Colonic mucosa (tissue), 4 donors: ENCODE measurements at regions of chr16 and their contacts with region 1.

Region 1: DNA sequence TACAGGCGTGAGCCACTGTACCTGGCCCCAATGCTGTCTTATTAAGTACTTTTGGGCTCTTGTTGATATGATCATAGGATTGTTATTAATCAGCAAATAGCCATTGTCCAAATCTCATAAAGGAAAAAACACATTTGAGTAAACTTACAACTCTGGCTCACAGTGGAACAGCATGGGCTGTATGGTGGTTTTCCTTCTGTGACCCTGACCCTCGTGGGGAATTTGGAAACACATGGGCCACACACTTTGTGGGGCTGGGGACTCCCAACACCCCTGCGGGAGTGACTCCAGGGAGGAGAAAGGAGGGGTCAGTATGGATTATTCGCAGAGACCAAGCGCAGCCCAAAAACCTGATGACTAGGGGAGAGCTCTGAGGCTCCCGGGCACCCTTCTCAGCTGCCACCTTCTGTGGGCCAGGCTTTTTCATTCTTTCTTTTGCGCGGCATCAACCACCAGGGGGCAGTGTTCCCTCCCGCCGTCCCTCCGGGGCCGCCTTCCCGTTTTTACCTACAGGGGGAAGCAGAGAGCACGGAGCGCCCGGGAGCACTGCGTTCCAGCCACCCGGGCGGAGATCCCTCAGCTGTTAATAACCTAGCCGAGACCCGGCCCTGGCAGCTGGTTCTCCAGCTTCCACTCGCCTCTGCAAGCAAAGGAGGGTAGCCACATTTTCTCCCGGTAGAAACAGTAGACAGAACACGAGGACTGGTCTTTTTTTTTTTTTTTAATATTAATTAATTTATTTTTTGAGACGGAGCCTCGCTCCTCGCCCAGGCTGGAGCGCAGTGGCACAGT is 9.7 kb downstream of the TSNAXIP1 start:
- DNase-seq: peak; percentile 88
- H3K4me3 ChIP-seq: no peak overlapping the region
- H3K27ac ChIP-seq: no peak overlapping the region
- H3K4me1 ChIP-seq: no peaks in the 10 kb centered on the region
- H3K27me3 ChIP-seq: no peaks in the 10 kb centered on the region
- CTCF ChIP-seq: peak; percentile 100

Region 2: DNA sequence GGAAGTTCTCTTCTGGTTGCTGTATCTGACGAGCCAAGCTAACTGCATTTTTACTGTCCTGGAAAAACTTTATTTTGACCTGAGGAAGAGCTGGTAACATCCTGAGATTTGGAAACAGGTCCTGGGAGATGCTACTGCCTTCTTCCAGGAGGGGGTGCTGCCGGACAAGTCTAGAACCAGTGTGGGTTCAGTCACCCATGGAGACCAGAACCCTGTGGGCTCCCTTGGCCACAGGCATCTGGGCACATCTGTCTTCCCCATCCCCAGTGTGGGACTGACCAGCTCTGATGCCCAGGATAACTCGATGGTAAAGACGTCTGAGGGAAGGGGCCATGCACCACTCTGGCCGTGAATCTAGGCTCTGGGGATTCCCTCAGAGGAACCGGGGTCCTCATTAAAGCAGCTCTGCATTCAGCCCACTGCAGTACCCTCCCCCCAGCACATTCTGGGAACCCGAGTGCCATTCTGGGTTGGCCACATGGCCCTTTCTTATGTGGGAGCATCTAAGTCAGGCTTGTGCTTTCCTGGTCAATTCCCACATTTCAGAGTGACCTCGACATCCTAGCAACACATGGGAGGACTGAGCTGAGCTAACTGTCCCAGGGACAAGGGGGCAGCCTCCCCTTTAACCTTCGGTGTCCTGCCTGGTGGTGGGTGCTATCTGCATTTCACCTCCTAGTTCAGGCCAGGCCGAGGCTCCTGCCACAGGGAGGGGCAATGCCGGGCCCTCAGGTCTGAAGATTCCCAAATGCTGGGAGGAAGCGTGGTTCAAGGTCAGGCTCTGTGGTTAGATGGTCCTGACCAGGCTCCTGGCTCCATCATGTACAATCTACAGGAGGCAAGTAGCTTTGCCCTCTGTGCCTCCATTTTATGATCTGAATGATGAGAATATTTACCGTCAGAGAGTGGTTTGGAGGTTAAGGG is 143.4 kb before region 1 on chr16:
- intact Hi-C with region 1: loop called (anchors 5 kb)
- DNase-seq: peak; percentile 89
- H3K4me3 ChIP-seq: no peak overlapping the region
- H3K27ac ChIP-seq: peak overlapping the region; percentile 86
- H3K4me1 ChIP-seq: peaks cover 22% of the 10 kb centered on the region
- H3K27me3 ChIP-seq: no peaks in the 10 kb centered on the region
- CTCF ChIP-seq: peak; percentile 83

Region 3: GRCh38 chr16:67685388-67686112 is 130.9 kb before region 1 on chr16:
- intact Hi-C with region 1: no loop called
- DNase-seq: no peak
- H3K4me3 ChIP-seq: no peak overlapping the region
- H3K27ac ChIP-seq: no peak overlapping the region
- H3K4me1 ChIP-seq: no peaks in the 10 kb centered on the region
- H3K27me3 ChIP-seq: no peaks in the 10 kb centered on the region
- CTCF ChIP-seq: no peak

Region 4: GRCh38 chr16:67865316-67865715 is 48.9 kb after region 1 on chr16:
- intact Hi-C with region 1: loop called (anchors 10 kb)
- DNase-seq: no peak
- H3K4me3 ChIP-seq: no peak overlapping the region
- H3K27ac ChIP-seq: no peak overlapping the region
- H3K4me1 ChIP-seq: no peaks in the 10 kb centered on the region
- H3K27me3 ChIP-seq: no peaks in the 10 kb centered on the region
- CTCF ChIP-seq: peak; percentile 23

Region 5: DNA sequence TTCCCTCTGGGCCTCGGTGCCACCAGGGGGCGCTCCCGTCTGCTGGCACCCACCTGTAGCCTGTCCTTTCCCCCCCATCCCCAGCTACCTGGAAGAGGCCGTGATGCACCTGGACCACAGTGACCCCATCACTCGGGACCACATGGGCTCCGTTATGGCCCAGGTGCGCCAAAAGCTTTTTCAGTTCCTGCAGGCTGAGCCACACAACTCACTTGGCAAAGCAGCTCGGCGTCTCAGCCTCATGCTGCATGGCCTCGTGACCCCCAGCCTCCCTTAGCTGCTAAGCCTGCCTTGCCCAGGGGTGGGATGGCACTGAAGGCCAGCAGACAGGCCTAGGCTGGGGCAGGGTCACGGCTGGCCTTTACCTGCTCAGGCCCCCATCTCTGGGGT is 67.4 kb after region 1 on chr16:
- intact Hi-C with region 1: no loop called
- DNase-seq: peak; percentile 64
- H3K4me3 ChIP-seq: no peak overlapping the region
- H3K27ac ChIP-seq: no peak overlapping the region
- H3K4me1 ChIP-seq: no peaks in the 10 kb centered on the region
- H3K27me3 ChIP-seq: no peaks in the 10 kb centered on the region
- CTCF ChIP-seq: peak; percentile 92

Region 6: GRCh38 chr16:67928561-67929364 is 112.3 kb after region 1 on chr16:
- intact Hi-C with region 1: loop called (anchors 10 kb)
- DNase-seq: peak; percentile 84
- H3K4me3 ChIP-seq: no peak overlapping the region
- H3K27ac ChIP-seq: no peak overlapping the region
- H3K4me1 ChIP-seq: no peaks in the 10 kb centered on the region
- H3K27me3 ChIP-seq: no peaks in the 10 kb centered on the region
- CTCF ChIP-seq: peak; percentile 85